ENCODE measurements at regions of chr3 and their contacts with region 1.

Region 1: GRCh38 chr3:146134348-146135117 is 26.5 kb downstream of the PLOD2 start:
- DNase-seq: no peak
- H3K4me3 ChIP-seq: no peak overlapping the region
- H3K27ac ChIP-seq: no peak overlapping the region
- H3K4me1 ChIP-seq: peaks cover 42% of the 10 kb centered on the region
- H3K27me3 ChIP-seq: no peaks in the 10 kb centered on the region
- CTCF ChIP-seq: no peak

Region 2: DNA sequence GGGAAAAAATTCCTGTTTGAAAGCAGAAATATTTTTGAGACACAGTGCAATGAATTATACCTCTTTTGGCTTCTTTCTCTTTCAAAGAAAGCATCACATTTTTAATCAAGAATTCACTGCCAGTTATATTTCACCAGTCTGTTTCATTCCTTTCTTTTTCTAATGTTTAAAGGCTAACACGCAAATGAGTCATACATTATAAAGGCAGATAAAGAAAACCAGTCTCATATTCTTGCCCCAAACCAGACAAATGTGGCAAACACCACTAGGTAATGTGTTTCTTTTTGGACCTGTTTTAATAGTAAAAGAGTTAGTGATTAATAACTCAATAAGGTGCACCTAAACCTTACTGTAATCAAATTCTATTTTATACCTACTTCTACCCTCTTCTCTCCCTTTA is 57.4 kb before region 1 on chr3:
- CTCF ChIA-PET with region 1: no interaction called
- POLR2A ChIA-PET with region 1: no interaction called
- intact Hi-C with region 1: loop called (anchors 5 kb)
- DNase-seq: no peak
- H3K4me3 ChIP-seq: no peak overlapping the region
- H3K27ac ChIP-seq: no peak overlapping the region
- H3K4me1 ChIP-seq: no peaks in the 10 kb centered on the region
- H3K27me3 ChIP-seq: no peaks in the 10 kb centered on the region
- CTCF ChIP-seq: no peak

Measured in A673 (cell line).